Sigmoid colon (tissue), 7 donors: ENCODE measurements at regions of chr4 and their contacts with region 1.

Region 1: DNA sequence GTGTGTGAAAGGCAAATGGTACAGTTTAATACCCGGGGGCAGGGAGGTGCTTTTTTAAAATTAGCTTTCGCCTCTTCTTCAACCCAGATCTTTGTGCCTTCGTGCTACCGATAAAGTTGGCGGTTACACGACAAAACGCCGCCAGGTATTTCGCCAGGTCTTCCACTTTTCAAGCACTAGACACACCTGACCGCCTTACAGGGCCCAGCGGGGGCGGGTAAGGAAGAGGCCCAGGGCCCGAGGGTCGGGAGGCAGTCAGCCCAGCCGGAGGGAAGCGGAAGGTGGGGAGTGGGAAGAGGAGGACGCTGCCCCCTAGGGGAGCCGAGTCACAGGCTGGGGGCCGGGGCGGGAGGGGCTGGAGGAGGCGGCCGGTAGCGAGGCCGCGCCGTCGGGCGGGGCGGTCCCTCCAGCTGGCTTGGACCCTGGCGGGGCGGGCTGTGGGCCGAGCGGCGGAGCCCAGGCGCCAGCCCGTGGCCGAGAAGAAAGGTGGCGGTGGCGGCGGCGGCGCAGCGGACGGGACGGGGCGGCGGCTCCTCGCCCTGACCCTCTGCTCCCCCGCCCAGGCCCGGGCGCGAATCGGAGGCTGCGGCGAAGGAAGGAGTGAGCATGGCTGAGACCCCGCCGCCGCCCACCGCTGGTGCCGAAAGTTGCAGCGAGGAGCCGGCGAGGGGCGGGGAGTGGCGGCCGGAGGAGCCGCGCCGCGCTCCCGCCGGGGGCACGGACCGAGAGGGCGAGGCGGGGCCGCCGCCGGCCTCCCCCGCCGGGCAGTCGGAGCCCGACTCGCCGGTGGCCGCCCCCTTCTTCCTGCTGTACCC is 16.2 kb downstream of the UTP3 start:
- DNase-seq: peak; percentile 90
- H3K4me3 ChIP-seq: peak overlapping the region; percentile 66 to 91 (median 84)
- H3K27ac ChIP-seq: peak overlapping the region; percentile 92 to 98 (median 97)
- H3K4me1 ChIP-seq: peaks cover 0 to 30% (median 19%) of the 10 kb centered on the region in 4 donors
- H3K27me3 ChIP-seq: no peaks in the 10 kb centered on the region
- CTCF ChIP-seq: peak in 3 of 4 experiments; percentile 14 to 31 (median 16)
- EP300 ChIP-seq: no peak
- POLR2A ChIP-seq: no peak

Region 2: GRCh38 chr4:70687821-70688794 is 16.4 kb before region 1 on chr4 and contains the start of gene UTP3:
- intact Hi-C with region 1: loop called (anchors 1 kb)
- DNase-seq: peak; percentile 98
- H3K4me3 ChIP-seq: peak within 1 kb of the TSS; percentile 66 to 94 (median 79)
- H3K27ac ChIP-seq: peak within 1 kb of the TSS; percentile 93 to 95 (median 94)
- H3K4me1 ChIP-seq: peaks cover 0 to 35% (median 32%) of the 10 kb centered on the region in 4 donors
- H3K27me3 ChIP-seq: no peaks in the 10 kb centered on the region
- CTCF ChIP-seq: peak; percentile 78 to 95 (median 92)
- EP300 ChIP-seq: peak in 2 of 4 donors; percentile 25 to 50
- POLR2A ChIP-seq: peak; percentile 44 to 58
- total RNA-seq, gene UTP3: 15.3 to 19.7 (median 15.6) TPM

Region 3: GRCh38 chr4:70874268-70875156 is 170.0 kb after region 1 on chr4:
- intact Hi-C with region 1: no loop called
- DNase-seq: no peak
- H3K4me3 ChIP-seq: no peak overlapping the region
- H3K27ac ChIP-seq: no peak overlapping the region
- H3K4me1 ChIP-seq: no peaks in the 10 kb centered on the region
- H3K27me3 ChIP-seq: no peaks in the 10 kb centered on the region
- CTCF ChIP-seq: no peak
- EP300 ChIP-seq: no peak
- POLR2A ChIP-seq: no peak